ENCODE measurements at regions of chr15 and their contacts with region 1.

Region 1: DNA sequence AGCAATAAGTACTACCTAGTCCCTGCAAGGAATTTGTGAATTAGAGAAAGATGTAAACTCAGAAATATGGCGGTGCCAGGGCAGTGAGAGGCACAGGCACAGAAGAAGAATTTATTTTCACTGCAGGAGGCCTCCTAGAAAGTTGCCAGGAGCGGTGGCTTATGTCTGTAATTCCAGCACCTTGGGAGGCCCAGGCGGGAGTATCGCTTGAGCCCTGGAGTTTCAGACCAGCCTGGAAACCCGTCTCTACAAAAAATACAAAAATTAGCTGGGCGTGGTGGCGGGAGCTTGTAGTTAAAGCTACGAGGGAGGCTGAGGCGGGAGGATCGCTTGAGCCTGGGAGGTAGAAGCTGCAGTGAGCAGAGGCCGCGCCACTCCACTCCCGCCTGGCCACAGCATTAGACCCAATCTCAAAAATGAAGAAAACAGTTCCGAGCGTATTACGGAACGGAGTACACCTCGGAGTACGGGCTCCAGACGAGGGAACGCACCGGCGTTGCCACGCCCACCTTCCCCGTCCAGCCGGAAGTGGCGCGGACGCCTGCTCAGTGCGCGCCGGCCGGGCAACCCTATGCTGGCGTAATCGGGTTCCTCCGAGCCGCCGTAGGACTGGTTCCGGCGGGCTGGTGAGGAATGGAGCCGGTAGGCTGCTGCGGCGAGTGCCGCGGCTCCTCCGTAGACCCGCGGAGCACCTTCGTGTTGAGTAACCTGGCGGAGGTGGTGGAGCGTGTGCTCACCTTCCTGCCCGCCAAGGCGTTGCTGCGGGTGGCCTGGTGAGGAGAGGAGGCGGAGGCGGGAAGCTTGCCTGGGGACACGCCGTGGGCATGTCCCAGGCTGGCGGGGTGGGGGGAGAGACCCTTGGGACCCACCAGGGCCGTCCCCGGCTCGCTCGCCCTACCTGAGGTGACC is at the start of gene FBXO22:
- DNase-seq: peak; percentile 70 to 95
- H3K4me3 ChIP-seq: peak within 1 kb of the TSS; percentile 85 to 98
- H3K27ac ChIP-seq: peak within 1 kb of the TSS; percentile 53 to 86
- H3K4me1 ChIP-seq: peaks cover 0 to 8% of the 10 kb centered on the region in 2 donors
- H3K27me3 ChIP-seq: no peaks in the 10 kb centered on the region
- CTCF ChIP-seq: no peak
- total RNA-seq, gene FBXO22: 2.9 TPM

Region 2: DNA sequence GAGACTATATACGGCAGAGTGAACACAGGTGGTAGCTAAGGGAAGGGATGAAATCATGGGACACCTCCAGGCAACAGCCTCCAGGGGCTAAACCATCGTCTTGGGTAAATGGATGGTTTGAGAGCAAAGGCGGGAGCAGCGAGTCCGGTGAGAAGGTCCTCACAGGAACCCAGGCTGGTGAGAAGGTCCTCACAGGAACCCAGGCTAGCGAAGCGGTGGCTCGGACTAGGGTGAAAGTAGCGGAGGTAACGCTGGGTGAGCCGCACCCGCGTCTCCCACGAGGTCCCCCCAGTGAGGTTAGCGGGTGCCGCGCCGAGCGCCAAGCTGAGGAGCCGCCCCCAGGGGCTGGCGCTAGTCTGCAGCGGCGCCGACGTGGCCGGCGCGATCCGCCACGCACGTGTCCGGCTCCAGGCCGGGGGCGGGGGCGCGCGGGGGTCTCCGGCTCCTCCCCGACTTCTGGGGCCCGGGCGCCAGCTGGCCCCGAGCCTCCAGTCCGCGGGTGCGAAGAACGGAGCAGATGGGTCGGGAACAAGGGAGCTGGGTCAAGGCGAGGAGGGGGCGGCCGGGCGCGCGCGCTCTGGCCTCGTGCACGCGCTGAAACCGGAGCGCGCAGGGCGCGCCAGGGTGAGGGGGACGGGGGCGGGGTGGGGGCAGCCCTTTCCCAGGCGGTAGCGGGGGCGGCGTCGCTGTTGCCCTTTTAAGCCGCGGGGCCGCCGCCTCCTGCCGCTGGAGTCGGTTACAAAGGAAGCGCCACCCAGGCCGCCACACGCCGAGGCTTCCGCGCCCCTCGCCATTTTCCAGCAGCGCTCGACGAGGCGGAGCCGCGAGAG is 60.6 kb before region 1 on chr15 and contains the start of gene UBE2Q2:
- intact Hi-C with region 1: loop called (anchors 2 kb)
- DNase-seq: peak in 1 of 2 donors; percentile 87
- H3K4me3 ChIP-seq: peak within 1 kb of the TSS; percentile 80 to 97
- H3K27ac ChIP-seq: peak within 1 kb of the TSS; percentile 93 to 97
- H3K4me1 ChIP-seq: peaks cover 5 to 30% of the 10 kb centered on the region in 2 donors
- H3K27me3 ChIP-seq: no peaks in the 10 kb centered on the region
- CTCF ChIP-seq: no peak
- total RNA-seq, gene UBE2Q2: 40.3 TPM

Measured in ascending aorta (tissue), 2 donors.